ENCODE measurements at regions of chr14 and their contacts with region 1.

Region 1: DNA sequence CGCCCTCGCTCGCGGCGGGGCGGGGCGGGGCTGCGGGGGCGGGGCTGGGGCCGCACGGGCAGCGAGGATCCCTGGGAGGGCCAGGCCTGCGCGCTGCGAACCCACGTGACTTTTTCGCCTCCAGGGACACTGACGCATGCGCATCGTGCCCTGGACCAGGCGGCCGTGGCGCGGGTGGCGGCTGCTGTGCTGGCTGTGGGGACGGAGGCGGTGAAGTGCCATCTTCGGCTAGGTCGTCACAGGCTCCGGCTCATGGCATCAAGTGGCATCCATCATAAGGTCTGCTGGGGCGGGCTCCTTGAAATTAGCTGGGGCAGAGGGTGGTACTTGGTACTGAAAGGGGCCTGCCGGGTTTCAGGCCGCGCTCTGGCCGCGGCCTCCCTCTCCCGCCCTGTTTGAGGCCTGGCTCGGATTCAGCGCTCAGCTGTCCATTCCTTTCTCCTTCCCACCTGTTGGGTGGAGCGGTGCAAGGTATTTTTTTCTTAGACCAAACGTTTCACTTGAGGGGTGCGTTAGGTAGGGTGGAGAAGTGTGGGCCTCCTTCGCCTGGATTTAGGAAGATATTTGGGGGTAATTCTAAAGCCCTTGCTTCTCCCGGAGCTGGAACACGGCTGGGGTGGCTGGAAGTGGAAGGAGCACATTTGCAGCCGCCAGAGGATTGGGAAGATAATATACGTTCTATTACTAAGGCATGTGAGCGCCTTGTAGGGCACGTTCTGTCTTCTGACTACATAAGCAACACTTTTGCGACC is at the start of gene PRPF39:
- DNase-seq: peak; percentile 96
- H3K4me3 ChIP-seq: peak within 1 kb of the TSS; percentile 56 to 73 (median 67)
- H3K27ac ChIP-seq: peak within 1 kb of the TSS; percentile 80 to 87 (median 84)
- H3K4me1 ChIP-seq: peaks cover 0 to 45% (median 34%) of the 10 kb centered on the region in 4 donors
- H3K27me3 ChIP-seq: no peaks in the 10 kb centered on the region
- CTCF ChIP-seq: peak in 1 of 4 experiments; percentile 10
- EP300 ChIP-seq: no peak
- POLR2A ChIP-seq: peak; percentile 88 to 89
- total RNA-seq, gene PRPF39: 23.2 to 41.0 (median 30.0) TPM

Region 2: GRCh38 chr14:44897045-44897844 is 186.9 kb before region 1 on chr14:
- intact Hi-C with region 1: loop called (anchors 2 kb)
- DNase-seq: peak; percentile 99
- H3K4me3 ChIP-seq: peak overlapping the region; percentile 82 to 95 (median 87)
- H3K27ac ChIP-seq: peak overlapping the region; percentile 99 to 100 (median 99)
- H3K4me1 ChIP-seq: peaks cover 0 to 53% (median 34%) of the 10 kb centered on the region in 4 donors
- H3K27me3 ChIP-seq: no peaks in the 10 kb centered on the region
- CTCF ChIP-seq: no peak
- EP300 ChIP-seq: no peak
- POLR2A ChIP-seq: peak; percentile 66 to 75

Region 3: GRCh38 chr14:44961604-44962333 is 122.4 kb before region 1 on chr14 and contains the starts of genes KLHL28 and TOGARAM1:
- intact Hi-C with region 1: loop called (anchors 2 kb)
- DNase-seq: peak; percentile 99
- H3K4me3 ChIP-seq: peak within 1 kb of the TSS; percentile 59 to 86 (median 72)
- H3K27ac ChIP-seq: peak within 1 kb of the TSS; percentile 91 to 94 (median 92)
- H3K4me1 ChIP-seq: peaks cover 0 to 67% (median 56%) of the 10 kb centered on the region in 4 donors
- H3K27me3 ChIP-seq: no peaks in the 10 kb centered on the region
- CTCF ChIP-seq: no peak
- EP300 ChIP-seq: peak in 1 of 4 donors; percentile 78
- POLR2A ChIP-seq: peak; percentile 84 to 90
- total RNA-seq, gene KLHL28: 9.0 to 16.5 (median 11.3) TPM
- total RNA-seq, gene TOGARAM1: 14.3 to 27.1 (median 19.8) TPM

Measured in sigmoid colon (tissue), 7 donors.